Activated CD8-positive, alpha-beta T cell treated with anti-CD3 and anti-CD28 coated beads for 36 hours (primary cell): ENCODE measurements at regions of chr14 and their contacts with region 1.

Region 1: GRCh38 chr14:61342486-61342885 is 21.1 kb downstream of the PRKCH start:
- DNase-seq: peak; percentile 94
- ATAC-seq: peak; percentile 60
- H3K4me3 Mint-ChIP-seq: peak overlapping the region; percentile 80
- H3K27ac Mint-ChIP-seq: peak overlapping the region; percentile 98
- H3K4me1 Mint-ChIP-seq: peaks cover 95% of the 10 kb centered on the region
- H3K27me3 Mint-ChIP-seq: no peaks in the 10 kb centered on the region
- CTCF ChIP-seq: no peak

Region 2: DNA sequence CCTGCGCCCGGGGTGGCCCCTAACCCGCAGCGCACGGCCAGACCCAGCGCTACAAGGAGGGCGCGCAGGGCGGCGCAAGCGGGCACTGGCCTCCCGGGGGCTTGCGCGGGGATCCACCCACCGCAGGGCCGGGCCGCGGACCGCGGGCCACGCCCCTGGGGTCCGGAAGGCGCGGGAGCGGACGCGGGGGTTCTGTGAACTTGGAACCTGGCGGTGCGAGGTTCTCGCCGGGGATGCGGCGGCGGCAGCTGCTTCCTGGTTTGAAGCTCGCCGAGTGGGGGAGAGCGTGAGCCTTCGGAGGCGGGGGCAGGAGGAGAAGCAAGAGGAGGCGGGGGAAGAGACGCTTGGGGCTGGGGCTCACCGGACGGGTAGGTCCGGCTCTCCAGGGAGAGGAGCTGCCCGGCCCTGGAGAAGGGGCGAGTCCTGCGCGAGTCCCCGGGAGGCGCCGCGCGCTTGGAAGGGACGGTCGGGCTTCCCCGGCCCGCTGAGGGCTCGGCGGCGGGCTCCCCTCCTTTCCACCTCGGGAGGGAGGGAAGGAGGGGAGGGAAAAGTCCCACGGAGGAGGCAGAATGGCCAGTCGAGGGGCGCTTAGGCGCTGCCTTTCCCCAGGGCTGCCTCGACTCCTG is 21.0 kb before region 1 on chr14 and contains the start of gene PRKCH:
- CTCF ChIA-PET with region 1: interaction called, 6 read pairs
- POLR2A ChIA-PET with region 1: interaction called, 54 read pairs
- intact Hi-C with region 1: no loop called
- DNase-seq: peak; percentile 90
- ATAC-seq: peak; percentile 72
- H3K4me3 Mint-ChIP-seq: peak within 1 kb of the TSS; percentile 99
- H3K27ac Mint-ChIP-seq: peak within 1 kb of the TSS; percentile 93
- H3K4me1 Mint-ChIP-seq: peaks cover 22% of the 10 kb centered on the region
- H3K27me3 Mint-ChIP-seq: no peaks in the 10 kb centered on the region
- CTCF ChIP-seq: no peak
- total RNA-seq, gene PRKCH: 193 to 194 TPM

Region 3: GRCh38 chr14:61360796-61361525 is 18.5 kb after region 1 on chr14:
- CTCF ChIA-PET with region 1: interaction called, 6 read pairs
- POLR2A ChIA-PET with region 1: interaction called, 16 read pairs
- intact Hi-C with region 1: no loop called
- DNase-seq: peak; percentile 61
- ATAC-seq: peak; percentile 60
- H3K4me3 Mint-ChIP-seq: peak overlapping the region; percentile 20
- H3K27ac Mint-ChIP-seq: peak overlapping the region; percentile 83
- H3K4me1 Mint-ChIP-seq: peaks cover 52% of the 10 kb centered on the region
- H3K27me3 Mint-ChIP-seq: no peaks in the 10 kb centered on the region
- CTCF ChIP-seq: no peak

Region 4: DNA sequence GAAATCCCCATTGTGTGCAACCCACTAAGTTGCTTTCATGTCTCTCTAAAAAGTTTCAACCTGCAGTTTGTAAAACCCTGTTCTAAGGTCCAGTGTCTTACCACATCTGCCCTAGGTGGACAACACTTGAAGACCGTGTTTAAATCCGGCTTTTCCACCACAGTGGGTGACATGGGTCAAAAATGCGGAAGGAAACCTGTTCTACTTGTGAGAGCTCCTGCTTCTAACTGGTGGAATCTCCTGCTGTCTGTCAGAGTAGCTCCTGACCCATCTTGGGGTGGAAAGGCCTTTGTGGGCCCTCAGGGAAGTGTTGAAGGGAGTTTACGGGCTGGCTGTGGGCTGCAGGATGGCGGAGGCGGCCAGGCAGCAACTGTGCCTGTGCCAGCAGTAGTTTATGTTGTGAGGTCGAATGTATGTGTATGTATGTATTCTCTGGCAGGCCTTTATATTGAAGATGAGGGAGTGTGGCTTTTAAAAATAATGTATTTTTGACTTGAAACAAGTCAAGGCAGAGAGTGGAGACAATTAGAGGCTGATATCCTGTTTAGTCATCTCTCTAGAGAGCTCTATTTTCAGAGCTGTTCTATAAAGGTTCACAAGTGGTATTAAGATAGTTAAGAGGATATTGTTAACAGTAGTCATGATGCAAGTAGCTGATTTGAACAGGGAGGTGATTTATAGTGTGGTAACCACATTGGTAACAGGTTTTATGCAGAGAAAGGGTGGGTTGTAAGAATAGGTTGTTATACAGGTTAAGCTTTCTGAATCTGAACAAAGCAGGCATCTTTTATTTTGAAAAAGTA is 45.9 kb after region 1 on chr14:
- CTCF ChIA-PET with region 1: interaction called, 17 read pairs
- POLR2A ChIA-PET with region 1: interaction called, 39 read pairs
- intact Hi-C with region 1: loop called (anchors 2 kb)
- DNase-seq: peak; percentile 76
- ATAC-seq: peak; percentile 72
- H3K4me3 Mint-ChIP-seq: no peak overlapping the region
- H3K27ac Mint-ChIP-seq: no peak overlapping the region
- H3K4me1 Mint-ChIP-seq: peaks cover 30% of the 10 kb centered on the region
- H3K27me3 Mint-ChIP-seq: no peaks in the 10 kb centered on the region
- CTCF ChIP-seq: no peak

Region 5: GRCh38 chr14:61662437-61663311 is 320.2 kb after region 1 on chr14:
- CTCF ChIA-PET with region 1: no interaction called
- POLR2A ChIA-PET with region 1: no interaction called
- intact Hi-C with region 1: loop called (anchors 10 kb)
- DNase-seq: peak; percentile 81
- ATAC-seq: peak; percentile 85
- H3K4me3 Mint-ChIP-seq: peak overlapping the region; percentile 51
- H3K27ac Mint-ChIP-seq: peak overlapping the region; percentile 97
- H3K4me1 Mint-ChIP-seq: peaks cover 61% of the 10 kb centered on the region
- H3K27me3 Mint-ChIP-seq: no peaks in the 10 kb centered on the region
- CTCF ChIP-seq: no peak